ENCODE measurements at regions of chr1 and their contacts with region 1.

Region 1: DNA sequence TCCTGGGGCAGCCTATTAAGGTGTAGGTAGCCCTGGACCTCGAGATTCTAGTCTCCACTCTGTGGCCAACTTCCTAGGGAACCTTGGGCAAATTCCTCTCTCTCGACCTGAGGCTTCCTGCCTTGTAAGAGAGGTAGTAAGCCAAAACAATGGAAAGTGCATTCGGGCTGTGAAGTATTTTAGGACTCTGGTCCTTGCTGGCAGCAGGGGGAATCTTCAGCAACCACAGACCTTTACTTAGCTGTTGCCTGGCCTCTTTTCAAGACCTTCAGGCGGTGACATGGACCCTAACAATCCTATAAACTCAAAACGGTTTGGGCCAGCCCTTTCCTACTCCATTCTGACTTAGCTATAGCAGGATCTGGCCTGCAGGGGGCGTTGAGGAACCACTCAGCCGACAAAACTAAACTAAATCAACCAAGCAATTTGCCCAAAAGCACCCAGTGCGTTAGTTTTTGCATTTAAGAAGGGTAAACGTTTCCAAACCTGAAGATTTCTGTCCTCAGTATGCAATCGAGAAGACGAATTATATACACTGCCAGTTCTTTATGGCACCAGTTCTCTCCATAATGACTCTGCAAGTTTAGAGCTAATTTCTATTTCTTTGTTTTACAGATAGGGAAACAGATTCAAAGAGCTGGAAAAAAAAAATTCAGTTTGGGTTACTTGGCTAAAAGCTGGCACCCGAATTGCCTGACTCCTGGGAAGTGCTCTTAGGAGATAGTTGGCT is 10.9 kb upstream of the SESN2 start:
- DNase-seq: peak in 1 of 2 donors; percentile 90
- H3K4me3 ChIP-seq: peak overlapping the region; percentile 31 to 54
- H3K27ac ChIP-seq: peak overlapping the region; percentile 79 to 87
- H3K4me1 ChIP-seq: peaks cover 14 to 29% of the 10 kb centered on the region in 2 donors
- H3K27me3 ChIP-seq: no peaks in the 10 kb centered on the region
- CTCF ChIP-seq: peak; percentile 81 to 95 (median 90)

Region 2: DNA sequence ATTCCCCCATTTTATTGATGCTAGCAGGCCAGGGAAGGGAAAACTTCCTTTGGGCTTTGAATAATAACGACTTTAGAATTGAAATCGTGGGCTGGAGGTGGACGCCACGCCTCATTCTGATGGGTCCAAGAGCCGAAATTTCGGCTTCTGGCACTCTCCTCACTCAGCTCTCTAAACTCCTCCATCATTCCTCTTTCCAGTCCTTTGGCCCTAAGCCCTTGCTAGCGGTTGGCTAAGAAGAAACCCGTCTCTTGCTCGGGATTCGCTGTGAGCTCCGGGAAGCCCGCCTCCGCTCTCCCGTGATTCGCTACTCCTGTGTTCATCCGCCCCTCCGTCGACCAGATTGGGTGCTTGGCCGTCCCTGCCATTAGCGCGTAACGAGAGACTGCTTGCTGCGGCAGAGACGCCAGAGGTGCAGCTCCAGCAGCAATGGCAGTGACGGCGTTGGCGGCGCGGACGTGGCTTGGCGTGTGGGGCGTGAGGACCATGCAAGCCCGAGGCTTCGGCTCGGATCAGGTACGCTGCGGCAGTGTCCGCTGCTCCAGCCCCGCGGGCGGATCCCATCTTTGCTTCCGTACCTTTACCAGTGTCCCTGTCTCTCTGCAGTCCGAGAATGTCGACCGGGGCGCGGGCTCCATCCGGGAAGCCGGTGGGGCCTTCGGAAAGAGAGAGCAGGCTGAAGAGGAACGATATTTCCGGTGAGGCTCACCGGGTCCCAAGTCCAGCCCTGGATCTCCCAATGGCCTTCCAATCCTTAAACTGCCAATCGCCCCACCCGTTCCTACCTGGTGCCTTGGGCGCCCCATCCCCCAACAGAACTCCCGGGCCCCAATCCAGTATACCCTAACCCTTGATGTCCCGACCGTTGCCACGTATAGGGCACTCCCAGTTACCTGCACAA is 12.4 kb before region 1 on chr1 and contains the start of gene ATP5IF1:
- intact Hi-C with region 1: loop called (anchors 1 kb)
- DNase-seq: peak; percentile 95 to 99
- H3K4me3 ChIP-seq: peak within 1 kb of the TSS; percentile 80 to 86
- H3K27ac ChIP-seq: peak within 1 kb of the TSS; percentile 83 to 85
- H3K4me1 ChIP-seq: peaks cover 7 to 28% of the 10 kb centered on the region in 2 donors
- H3K27me3 ChIP-seq: no peaks in the 10 kb centered on the region
- CTCF ChIP-seq: peak in 1 of 3 experiments; percentile 8
- total RNA-seq, gene ATP5IF1: 220 TPM

Region 3: DNA sequence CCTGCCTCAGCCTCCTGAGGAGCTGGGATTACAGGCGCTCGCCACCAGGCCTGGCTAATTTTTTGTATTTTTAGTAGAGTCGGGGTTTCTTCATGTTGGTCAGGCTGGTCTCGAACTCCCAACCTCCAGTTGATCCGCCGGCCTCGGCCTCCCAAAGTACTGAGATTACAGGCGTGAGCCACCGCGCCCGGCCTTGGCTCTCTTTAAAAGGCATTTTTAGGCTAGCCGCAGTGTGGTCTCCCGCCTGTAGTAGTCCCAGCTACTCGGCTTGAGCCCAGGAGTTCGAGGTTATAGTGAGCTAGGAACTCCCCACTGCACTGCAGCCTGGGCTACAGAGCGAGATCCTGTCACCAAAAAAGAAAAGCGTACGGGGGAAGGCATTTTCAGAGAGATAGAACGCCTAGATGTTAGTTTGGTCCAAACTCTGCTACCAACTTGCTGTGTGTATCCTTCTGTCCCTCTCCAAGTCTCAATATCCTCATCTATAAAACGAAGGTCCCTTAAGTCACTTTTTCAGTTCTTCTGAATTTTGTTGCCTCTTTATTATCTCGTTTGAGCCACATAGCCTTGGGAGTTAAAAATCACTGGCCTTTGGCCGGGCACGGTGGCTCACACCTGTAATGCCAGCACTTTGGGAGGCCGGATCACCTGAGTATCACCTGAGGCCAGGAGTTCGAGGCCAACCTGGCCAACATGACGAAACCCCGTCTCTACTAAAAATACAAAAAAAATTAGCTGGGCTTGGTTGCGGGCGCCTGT is 81.1 kb after region 1 on chr1:
- intact Hi-C with region 1: loop called (anchors 1 kb)
- DNase-seq: peak in 1 of 2 donors; percentile 67
- H3K4me3 ChIP-seq: peak overlapping the region; percentile 63 to 71
- H3K27ac ChIP-seq: peak overlapping the region; percentile 75 to 82
- H3K4me1 ChIP-seq: peaks cover 2 to 10% of the 10 kb centered on the region in 2 donors
- H3K27me3 ChIP-seq: no peaks in the 10 kb centered on the region
- CTCF ChIP-seq: peak in 1 of 3 experiments; percentile 11

Region 4: GRCh38 chr1:28369371-28370238 is 121.2 kb after region 1 on chr1 and contains the start of gene PHACTR4:
- intact Hi-C with region 1: loop called (anchors 1 kb)
- DNase-seq: peak; percentile 59 to 94
- H3K4me3 ChIP-seq: peak within 1 kb of the TSS; percentile 86 to 89
- H3K27ac ChIP-seq: peak within 1 kb of the TSS; percentile 92 to 94
- H3K4me1 ChIP-seq: peaks cover 8 to 17% of the 10 kb centered on the region in 2 donors
- H3K27me3 ChIP-seq: no peaks in the 10 kb centered on the region
- CTCF ChIP-seq: no peak
- total RNA-seq, gene PHACTR4: 33.0 TPM

Region 5: GRCh38 chr1:28437934-28438699 is 189.7 kb after region 1 on chr1:
- intact Hi-C with region 1: loop called (anchors 10 kb)
- DNase-seq: peak; percentile 59 to 93
- H3K4me3 ChIP-seq: peak overlapping the region; percentile 29 to 48
- H3K27ac ChIP-seq: peak overlapping the region; percentile 81 to 85
- H3K4me1 ChIP-seq: peaks cover 11% of the 10 kb centered on the region in 2 donors
- H3K27me3 ChIP-seq: no peaks in the 10 kb centered on the region
- CTCF ChIP-seq: no peak